AG04449 (cell line): ENCODE measurements at regions of chr2 and their contacts with region 1.

Region 1: DNA sequence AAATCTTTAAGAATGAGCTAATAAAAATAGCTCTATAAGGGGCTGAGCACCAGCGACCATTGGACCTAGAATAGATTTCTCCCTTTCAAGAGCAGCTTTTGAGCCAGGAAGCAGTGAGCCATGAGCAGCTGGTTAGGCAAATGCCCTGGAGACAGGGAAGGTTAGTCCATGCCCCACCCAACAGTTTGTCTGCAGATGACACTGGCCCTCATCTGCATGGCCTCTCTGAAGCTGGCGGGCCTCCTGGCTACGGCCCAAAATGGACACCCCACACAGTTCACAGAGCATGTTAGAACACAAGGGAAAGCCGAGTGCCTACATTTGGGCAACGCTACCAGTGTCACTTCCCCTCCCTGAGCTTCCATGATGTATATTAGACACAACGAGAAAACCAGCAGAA is 201.1 kb downstream of the MGAT5 start:
- DNase-seq: no peak
- H3K4me3 ChIP-seq: no peak overlapping the region
- CTCF ChIP-seq: no peak

Region 2: GRCh38 chr2:134348239-134348638 is 106.7 kb before region 1 on chr2:
- CTCF ChIA-PET with region 1: interaction called, 12 read pairs
- POLR2A ChIA-PET with region 1: no interaction called
- DNase-seq: no peak
- H3K4me3 ChIP-seq: no peak overlapping the region
- CTCF ChIP-seq: no peak

Region 3: DNA sequence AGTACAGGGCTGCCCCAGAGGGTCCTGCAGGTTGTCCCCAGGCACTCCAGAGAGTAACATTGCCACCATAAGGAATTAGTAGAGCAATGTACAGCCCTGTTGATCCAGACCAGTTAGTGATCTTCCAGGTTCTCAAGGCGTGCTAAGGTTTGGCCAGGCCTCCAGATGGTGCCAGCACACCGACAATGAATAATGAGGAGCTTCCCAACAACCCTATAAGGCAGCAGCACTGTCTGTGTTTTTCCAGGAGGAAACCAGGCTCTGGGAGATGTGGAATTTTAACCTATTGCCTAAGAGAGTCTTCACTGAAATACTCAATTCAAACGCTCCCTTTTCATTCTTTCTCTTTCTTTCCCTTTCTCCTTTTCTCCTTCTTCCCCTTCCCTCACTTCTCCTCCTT is 79.0 kb before region 1 on chr2:
- CTCF ChIA-PET with region 1: interaction called, 122 read pairs
- POLR2A ChIA-PET with region 1: no interaction called
- DNase-seq: no peak
- H3K4me3 ChIP-seq: no peak overlapping the region
- CTCF ChIP-seq: peak; percentile 70

Region 4: DNA sequence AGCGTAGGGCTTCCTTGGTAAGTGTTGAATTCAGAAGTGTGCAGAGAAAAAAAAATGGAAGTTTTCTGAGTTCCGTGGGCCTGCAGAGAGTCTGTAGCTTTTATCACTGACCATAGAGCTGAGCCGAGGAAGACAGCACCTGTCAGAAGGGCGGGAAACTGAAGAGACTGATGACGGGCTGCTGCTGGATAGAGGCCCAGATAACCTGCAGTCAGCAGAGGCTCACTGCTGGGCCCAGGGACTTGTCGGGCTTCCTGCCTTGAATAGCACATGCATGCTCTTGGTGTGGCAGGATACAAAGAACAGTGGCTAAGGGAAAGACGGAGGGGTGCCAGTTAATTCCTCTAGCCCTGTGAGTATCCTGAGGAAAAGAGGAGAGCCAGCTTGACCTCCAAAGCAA is 34.7 kb before region 1 on chr2:
- CTCF ChIA-PET with region 1: interaction called, 52 read pairs
- POLR2A ChIA-PET with region 1: no interaction called
- DNase-seq: no peak
- H3K4me3 ChIP-seq: no peak overlapping the region
- CTCF ChIP-seq: no peak

Region 5: DNA sequence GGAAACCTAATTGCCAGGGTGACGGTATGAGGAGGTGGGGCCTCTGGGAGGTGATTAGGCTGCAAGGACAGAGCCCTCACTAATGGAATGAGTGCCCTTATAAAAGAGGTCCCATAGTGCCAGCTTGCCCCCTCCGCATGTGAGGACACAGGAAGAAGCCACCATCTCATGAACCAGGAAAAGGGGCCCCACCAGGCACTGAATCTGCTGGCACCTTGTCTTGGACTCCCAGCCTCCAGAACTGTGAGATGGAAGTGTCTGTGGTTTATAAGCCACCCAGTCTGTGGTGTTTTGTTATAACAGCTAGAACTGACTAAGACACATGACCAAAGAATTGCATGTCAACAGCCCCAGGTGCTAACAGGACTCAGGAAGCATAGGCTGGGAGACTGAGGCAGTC is 13.2 kb after region 1 on chr2:
- CTCF ChIA-PET with region 1: interaction called, 46 read pairs
- POLR2A ChIA-PET with region 1: no interaction called
- DNase-seq: no peak
- H3K4me3 ChIP-seq: no peak overlapping the region
- CTCF ChIP-seq: no peak